ENCODE measurements at regions of chr20 and their contacts with region 1.

Region 1: GRCh38 chr20:41339507-41340326 is 904 bp upstream of the LPIN3 start:
- DNase-seq: peak; percentile 95
- H3K4me3 ChIP-seq: peak overlapping the region in 3 of 4 donors; percentile 17 to 49 (median 38)
- H3K27ac ChIP-seq: peak overlapping the region; percentile 84 to 92 (median 88)
- H3K4me1 ChIP-seq: peaks cover 6 to 36% (median 26%) of the 10 kb centered on the region in 4 donors
- H3K27me3 ChIP-seq: no peaks in the 10 kb centered on the region
- CTCF ChIP-seq: peak; percentile 97 to 100 (median 99)
- EP300 ChIP-seq: no peak
- POLR2A ChIP-seq: no peak

Region 2: GRCh38 chr20:40120827-40121226 is 1218.9 kb before region 1 on chr20:
- in situ Hi-C with region 1: no loop called
- intact Hi-C with region 1: no loop called
- DNase-seq: no peak
- H3K4me3 ChIP-seq: no peak overlapping the region
- H3K27ac ChIP-seq: no peak overlapping the region
- H3K4me1 ChIP-seq: no peaks in the 10 kb centered on the region
- H3K27me3 ChIP-seq: no peaks in the 10 kb centered on the region
- CTCF ChIP-seq: no peak
- EP300 ChIP-seq: no peak
- POLR2A ChIP-seq: no peak

Region 3: GRCh38 chr20:40962730-40963504 is 376.8 kb before region 1 on chr20:
- in situ Hi-C with region 1: loop called in 1 of 4 experiments (anchors 25 kb)
- intact Hi-C with region 1: no loop called
- DNase-seq: peak; percentile 72
- H3K4me3 ChIP-seq: no peak overlapping the region
- H3K27ac ChIP-seq: no peak overlapping the region
- H3K4me1 ChIP-seq: peaks cover 0 to 4% (median 0%) of the 10 kb centered on the region in 4 donors
- H3K27me3 ChIP-seq: peaks cover 4% of the 10 kb centered on the region
- CTCF ChIP-seq: peak; percentile 81 to 93 (median 91)
- EP300 ChIP-seq: no peak
- POLR2A ChIP-seq: no peak

Region 4: GRCh38 chr20:40970201-40970600 is 369.5 kb before region 1 on chr20:
- in situ Hi-C with region 1: loop called in 3 of 4 experiments (anchors 10 to 25 kb)
- intact Hi-C with region 1: no loop called
- DNase-seq: no peak
- H3K4me3 ChIP-seq: no peak overlapping the region
- H3K27ac ChIP-seq: no peak overlapping the region
- H3K4me1 ChIP-seq: peaks cover 0 to 7% (median 2%) of the 10 kb centered on the region in 4 donors
- H3K27me3 ChIP-seq: no peaks in the 10 kb centered on the region
- CTCF ChIP-seq: no peak
- EP300 ChIP-seq: no peak
- POLR2A ChIP-seq: no peak

Region 5: GRCh38 chr20:40990542-40991120 is 349.1 kb before region 1 on chr20:
- in situ Hi-C with region 1: loop called in 1 of 4 experiments (anchors 25 kb)
- intact Hi-C with region 1: no loop called
- DNase-seq: peak; percentile 86
- H3K4me3 ChIP-seq: no peak overlapping the region
- H3K27ac ChIP-seq: peak overlapping the region in 2 of 4 donors; percentile 2 to 26
- H3K4me1 ChIP-seq: peaks cover 0 to 13% (median 3%) of the 10 kb centered on the region in 4 donors
- H3K27me3 ChIP-seq: no peaks in the 10 kb centered on the region
- CTCF ChIP-seq: peak; percentile 74 to 86 (median 76)
- EP300 ChIP-seq: no peak
- POLR2A ChIP-seq: no peak

Region 6: GRCh38 chr20:41173161-41173721 is 166.5 kb before region 1 on chr20:
- in situ Hi-C with region 1: loop called (anchors 5 to 10 kb)
- intact Hi-C with region 1: loop called (anchors 2 kb)
- DNase-seq: peak; percentile 86
- H3K4me3 ChIP-seq: no peak overlapping the region
- H3K27ac ChIP-seq: peak overlapping the region; percentile 16 to 80 (median 50)
- H3K4me1 ChIP-seq: peaks cover 9 to 34% (median 21%) of the 10 kb centered on the region in 4 donors
- H3K27me3 ChIP-seq: no peaks in the 10 kb centered on the region
- CTCF ChIP-seq: peak; percentile 95 to 96 (median 95)
- EP300 ChIP-seq: no peak
- POLR2A ChIP-seq: no peak

Region 7: GRCh38 chr20:41228858-41229630 is 110.7 kb before region 1 on chr20:
- in situ Hi-C with region 1: no loop called
- intact Hi-C with region 1: loop called (anchors 1 kb)
- DNase-seq: no peak
- H3K4me3 ChIP-seq: no peak overlapping the region
- H3K27ac ChIP-seq: no peak overlapping the region
- H3K4me1 ChIP-seq: peaks cover 10 to 24% (median 13%) of the 10 kb centered on the region in 4 donors
- H3K27me3 ChIP-seq: no peaks in the 10 kb centered on the region
- CTCF ChIP-seq: no peak
- EP300 ChIP-seq: no peak
- POLR2A ChIP-seq: no peak

Region 8: GRCh38 chr20:41306061-41306727 is 33.5 kb before region 1 on chr20:
- in situ Hi-C with region 1: no loop called
- intact Hi-C with region 1: loop called (anchors 1 kb)
- DNase-seq: no peak
- H3K4me3 ChIP-seq: no peak overlapping the region
- H3K27ac ChIP-seq: no peak overlapping the region
- H3K4me1 ChIP-seq: peaks cover 14 to 22% (median 17%) of the 10 kb centered on the region in 4 donors
- H3K27me3 ChIP-seq: no peaks in the 10 kb centered on the region
- CTCF ChIP-seq: no peak
- EP300 ChIP-seq: no peak
- POLR2A ChIP-seq: no peak